IMR-90 (cell line): ENCODE measurements at regions of chr11 and their contacts with region 1.

Region 1: DNA sequence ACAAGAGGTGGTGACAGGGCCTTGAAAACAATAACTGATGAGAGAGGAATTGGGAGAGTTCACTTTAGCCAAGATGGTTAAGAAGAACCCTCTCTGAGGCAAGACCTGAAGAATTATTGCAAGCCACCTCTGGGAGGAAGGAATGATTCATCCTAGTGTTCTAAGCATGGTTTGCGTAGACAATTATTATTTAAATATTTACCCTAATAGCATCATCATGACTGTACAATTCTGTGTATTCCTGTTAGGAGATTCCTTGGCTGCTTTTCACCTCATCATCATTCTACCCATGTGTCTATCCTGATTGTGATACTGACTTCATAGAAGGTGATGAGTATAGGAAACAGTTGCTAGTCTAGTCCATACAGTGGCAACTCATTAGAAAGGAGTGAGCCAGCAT is 264.4 kb downstream of the DDX10 start:
- DNase-seq: peak; percentile 99
- ATAC-seq: peak; percentile 82
- H3K4me3 ChIP-seq: peak overlapping the region; percentile 31; the same call in 1 of the 2 replicates
- H3K27ac ChIP-seq: peak overlapping the region; percentile 89
- H3K4me1 ChIP-seq: peaks cover 15% of the 10 kb centered on the region
- H3K27me3 ChIP-seq: no peaks in the 10 kb centered on the region
- CTCF ChIP-seq: no peak
- POLR2A ChIP-seq: peak; percentile 68; the same call in 1 of the 2 replicates
- RAD21 ChIP-seq: peak; percentile 20; the same call in 1 of the 2 replicates

Region 2: DNA sequence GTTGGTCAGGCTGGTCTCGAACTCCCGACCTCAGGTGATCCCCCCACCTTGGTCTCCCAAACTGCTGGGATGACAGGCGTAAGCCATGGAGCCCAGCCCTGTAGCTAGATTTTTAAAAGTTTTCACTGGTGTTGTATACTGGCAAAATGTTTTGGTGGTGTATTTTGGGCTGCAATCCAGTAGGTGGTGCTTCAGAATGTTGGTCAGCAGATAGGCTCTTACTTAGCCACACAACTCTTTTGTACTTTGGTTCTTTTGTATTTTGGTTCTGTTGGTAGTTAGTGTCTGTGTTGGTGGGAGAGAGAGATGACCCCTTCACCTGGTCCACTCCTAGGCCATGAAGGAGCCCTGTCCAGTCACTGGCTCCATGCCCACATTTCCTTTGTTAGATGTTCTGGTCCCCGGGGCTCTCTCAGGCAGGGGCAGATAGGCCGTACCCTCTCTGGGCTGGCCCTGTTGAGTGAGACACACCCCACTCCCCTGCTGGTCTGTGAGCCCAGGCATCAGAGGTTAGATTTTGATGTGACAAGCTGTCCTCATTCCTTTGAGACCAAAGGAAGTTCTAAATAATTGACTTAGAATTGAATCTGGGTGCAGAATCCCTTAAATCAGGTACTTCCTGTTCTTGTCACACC is 140.6 kb before region 1 on chr11:
- CTCF ChIA-PET with region 1: interaction called, 3 read pairs
- POLR2A ChIA-PET with region 1: no interaction called
- dilution Hi-C with region 1: no loop called
- in situ Hi-C with region 1: no loop called
- intact Hi-C with region 1: loop called (anchors 5 kb)
- DNase-seq: peak; percentile 41
- ATAC-seq: peak; percentile 49
- H3K4me3 ChIP-seq: no peak overlapping the region
- H3K27ac ChIP-seq: no peak overlapping the region
- H3K4me1 ChIP-seq: peaks cover 3% of the 10 kb centered on the region; the same call in 1 of the 2 replicates
- H3K27me3 ChIP-seq: no peaks in the 10 kb centered on the region
- CTCF ChIP-seq: peak; percentile 47
- POLR2A ChIP-seq: no peak
- RAD21 ChIP-seq: peak; percentile 54

Region 3: GRCh38 chr11:109026891-109027489 is 97.7 kb after region 1 on chr11:
- CTCF ChIA-PET with region 1: no interaction called
- POLR2A ChIA-PET with region 1: no interaction called
- dilution Hi-C with region 1: no loop called
- in situ Hi-C with region 1: no loop called
- intact Hi-C with region 1: loop called (anchors 5 kb)
- DNase-seq: peak; percentile 66
- ATAC-seq: peak; percentile 85
- H3K4me3 ChIP-seq: no peak overlapping the region
- H3K27ac ChIP-seq: no peak overlapping the region
- H3K4me1 ChIP-seq: peaks cover 6% of the 10 kb centered on the region
- H3K27me3 ChIP-seq: no peaks in the 10 kb centered on the region
- CTCF ChIP-seq: no peak
- POLR2A ChIP-seq: no peak
- RAD21 ChIP-seq: no peak